ENCODE measurements at regions of chr12 and their contacts with region 1.

Region 1: DNA sequence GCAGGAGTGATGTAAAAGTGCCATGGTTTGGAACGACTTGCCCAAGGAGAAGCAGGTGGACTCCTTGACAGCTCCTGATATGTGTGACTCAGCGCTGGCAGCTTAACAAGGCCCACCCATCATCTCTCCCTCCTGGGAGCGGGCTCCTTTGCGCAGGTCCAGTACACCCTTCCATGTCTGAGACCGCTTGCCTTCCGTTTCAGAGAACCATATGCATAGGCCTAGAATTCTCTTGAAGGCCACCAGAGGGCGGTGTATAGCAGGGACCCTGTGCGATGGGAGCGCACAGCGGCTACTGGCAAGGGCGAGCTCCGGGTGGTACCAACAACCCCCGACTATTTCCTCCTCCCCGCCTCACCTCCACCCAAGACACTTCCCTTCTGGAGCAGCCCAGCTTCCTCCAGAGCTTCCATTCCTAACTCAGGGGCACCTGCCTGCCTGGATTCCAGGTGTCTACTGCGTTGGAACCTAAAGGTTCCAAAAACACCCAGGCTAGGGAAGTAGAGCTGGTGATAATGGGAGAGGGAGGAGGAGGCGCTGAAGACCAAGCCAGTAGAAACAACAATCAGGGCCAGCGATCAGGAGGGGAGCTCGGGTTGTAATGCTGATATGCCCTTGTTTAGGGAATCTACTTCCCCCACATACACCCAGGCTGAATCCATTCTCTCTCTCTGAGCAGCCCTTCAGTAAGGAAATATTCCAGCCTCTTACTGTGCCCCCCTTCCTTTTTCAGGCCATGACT is 6.2 kb downstream of the DHH start:
- H3K4me3 ChIP-seq: peak overlapping the region; percentile 25
- H3K27ac ChIP-seq: no peak overlapping the region
- H3K4me1 ChIP-seq: no peaks in the 10 kb centered on the region
- CTCF ChIP-seq: peak; percentile 97

Region 2: DNA sequence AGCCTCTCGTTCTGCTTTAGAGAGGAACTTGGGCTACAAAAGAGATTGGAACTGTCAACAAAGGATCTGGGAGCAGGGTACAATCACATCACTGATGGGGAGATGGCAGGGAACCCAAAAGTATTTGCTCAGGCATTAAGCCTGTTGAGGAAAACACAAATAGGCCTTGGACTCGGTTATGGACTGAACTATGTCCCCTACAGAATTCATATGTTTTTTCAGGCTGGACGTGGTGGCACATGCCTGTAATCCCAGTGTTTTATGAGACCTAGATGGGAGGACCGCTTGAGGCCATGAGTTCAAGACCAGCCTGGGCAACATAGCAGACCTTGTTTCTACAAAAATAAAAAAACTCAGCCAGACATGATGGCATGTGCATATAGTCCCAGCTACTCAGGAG is 250.3 kb before region 1 on chr12:
- CTCF ChIA-PET with region 1: no interaction called
- POLR2A ChIA-PET with region 1: no interaction called
- H3K4me3 ChIP-seq: no peak overlapping the region
- H3K27ac ChIP-seq: no peak overlapping the region
- H3K4me1 ChIP-seq: no peaks in the 10 kb centered on the region
- CTCF ChIP-seq: no peak

Region 3: DNA sequence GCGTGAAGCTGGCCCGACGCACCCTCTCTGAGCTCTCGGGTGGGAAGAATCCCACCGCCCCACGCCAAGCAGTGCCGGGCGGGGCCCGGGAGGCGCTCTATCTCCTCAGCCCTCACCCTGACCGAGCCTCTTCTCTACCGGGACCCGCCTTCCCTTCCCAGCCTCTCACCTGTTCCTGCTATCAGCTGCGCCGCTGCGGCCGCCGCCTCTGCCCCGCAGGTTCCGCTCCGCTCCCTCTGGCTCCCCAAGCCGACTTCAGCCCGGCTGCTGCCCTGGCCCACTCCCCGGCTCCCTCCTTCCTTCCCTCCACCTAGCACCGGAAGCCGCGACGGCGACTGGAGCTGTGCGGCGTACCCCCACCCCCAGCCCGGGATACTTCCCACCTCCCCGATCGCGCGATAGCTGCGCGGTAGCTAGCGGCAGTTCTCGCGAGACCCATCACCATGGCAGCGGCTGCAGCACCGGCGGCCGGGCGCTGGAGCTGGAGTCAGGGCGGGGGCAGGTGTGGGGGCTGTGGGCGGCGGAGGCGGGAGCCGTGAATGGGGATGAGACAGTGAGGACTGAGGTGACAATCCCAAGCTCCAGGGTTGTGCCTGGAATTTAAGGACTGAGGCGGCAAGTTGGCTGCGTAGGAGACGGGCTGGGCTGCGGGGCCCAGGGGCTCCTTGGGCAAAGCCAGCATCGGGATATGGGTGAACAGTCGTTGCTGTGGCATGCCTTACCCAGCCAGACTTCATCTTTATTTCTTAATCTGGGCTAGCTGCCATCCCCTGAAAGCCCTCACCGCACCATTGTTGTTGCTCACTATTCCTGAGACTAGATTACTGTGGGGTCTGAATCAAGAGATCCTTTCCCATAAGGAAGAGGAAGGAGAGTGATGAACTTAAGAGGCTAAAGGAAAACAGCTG is 131.0 kb before region 1 on chr12 and contains the start of gene ARF3:
- CTCF ChIA-PET with region 1: no interaction called
- POLR2A ChIA-PET with region 1: no interaction called
- H3K4me3 ChIP-seq: peak within 1 kb of the TSS; percentile 81
- H3K27ac ChIP-seq: peak within 1 kb of the TSS; percentile 90
- H3K4me1 ChIP-seq: no peaks in the 10 kb centered on the region
- CTCF ChIP-seq: no peak; the same call in none of the 2 replicates

Region 4: DNA sequence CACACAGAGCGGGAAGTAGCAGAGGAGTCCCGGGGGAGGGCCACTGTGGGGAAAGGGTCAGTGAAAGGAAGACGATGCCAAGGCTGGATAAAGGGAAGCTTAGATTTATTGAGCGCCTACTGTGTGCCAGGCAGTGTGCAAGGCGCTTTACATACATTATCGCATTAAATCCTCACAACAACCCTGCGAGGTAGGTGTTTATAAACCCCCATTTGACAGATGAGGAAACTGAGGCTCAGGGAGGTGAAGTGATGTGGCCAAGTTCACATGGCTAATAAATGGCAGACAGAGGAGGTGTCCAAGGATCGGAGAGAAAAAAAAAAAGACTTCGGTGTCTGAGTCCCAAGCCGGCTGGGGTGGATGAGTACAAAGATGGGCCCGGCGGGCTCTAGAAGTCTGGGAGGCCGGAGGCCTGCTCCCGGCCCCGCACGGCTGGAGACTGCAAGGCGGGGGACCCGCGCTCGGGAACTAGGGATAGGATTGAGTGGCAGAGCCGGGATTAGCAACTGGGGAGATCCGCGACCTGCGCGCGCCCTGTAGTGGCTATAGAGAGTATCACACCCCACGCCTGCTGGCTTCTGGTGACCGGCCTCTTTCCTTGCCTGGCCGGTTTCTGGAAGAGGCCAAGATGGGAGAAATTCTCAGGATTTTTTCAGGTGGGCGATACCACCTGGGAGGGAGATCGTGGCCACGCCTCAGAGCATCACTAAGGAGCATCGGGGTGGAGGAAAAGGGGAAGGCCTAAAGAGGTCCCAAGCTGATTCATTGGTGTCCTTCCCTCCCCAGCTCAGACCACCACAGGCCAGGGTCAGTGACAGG is 93.1 kb before region 1 on chr12:
- CTCF ChIA-PET with region 1: interaction called, 10 read pairs
- POLR2A ChIA-PET with region 1: no interaction called
- H3K4me3 ChIP-seq: no peak overlapping the region
- H3K27ac ChIP-seq: no peak overlapping the region
- H3K4me1 ChIP-seq: peaks cover 6% of the 10 kb centered on the region
- CTCF ChIP-seq: peak; percentile 68

Region 5: DNA sequence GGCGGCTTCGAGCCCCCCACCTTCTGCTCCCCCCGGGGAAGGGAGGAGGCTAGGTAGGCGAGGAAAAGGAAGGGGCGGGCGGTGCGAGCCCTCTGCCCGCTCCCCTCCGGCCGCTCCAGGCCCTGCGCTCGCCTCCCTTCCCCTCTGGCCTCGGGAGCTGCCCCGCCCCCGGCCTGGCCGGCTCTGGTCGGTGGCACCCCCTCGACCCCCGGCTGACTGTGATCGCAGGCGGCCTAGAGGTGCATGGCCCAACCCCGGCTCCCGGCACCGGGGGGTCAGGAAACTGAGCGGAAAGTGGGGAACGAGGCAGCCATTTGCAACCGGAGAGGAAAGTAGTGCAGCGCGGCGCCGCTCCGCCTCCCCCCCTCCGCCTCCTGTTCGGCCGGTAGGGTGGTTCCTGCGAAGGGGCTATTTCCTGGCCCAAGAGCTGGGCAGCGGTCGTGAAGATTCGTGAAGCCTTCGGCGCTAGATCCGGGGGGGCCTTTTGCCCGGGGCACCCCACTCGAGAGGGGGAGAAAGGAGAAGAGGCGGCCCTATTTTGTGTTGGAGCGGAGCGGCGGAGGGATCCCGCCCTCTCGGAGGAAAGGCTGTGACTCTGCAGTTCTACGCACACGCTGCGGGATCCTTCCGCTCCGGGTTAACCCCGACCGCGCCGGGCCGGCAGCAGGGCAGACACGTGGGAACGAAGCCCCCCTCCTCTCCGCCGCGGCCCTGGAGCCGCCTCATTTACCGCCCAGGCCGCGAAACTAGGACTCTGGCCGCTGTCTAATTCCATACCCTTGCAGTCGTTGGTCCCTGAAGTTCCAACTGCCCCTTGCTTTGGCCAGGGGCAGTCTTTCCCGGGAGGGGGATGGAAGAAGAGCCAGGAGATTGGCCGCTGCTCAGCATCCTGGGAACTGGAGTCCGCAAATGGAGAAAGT is 27.9 kb before region 1 on chr12 and contains the start of gene KMT2D:
- CTCF ChIA-PET with region 1: interaction called, 131 read pairs
- POLR2A ChIA-PET with region 1: interaction called, 15 read pairs
- H3K4me3 ChIP-seq: peak within 1 kb of the TSS; percentile 95
- H3K27ac ChIP-seq: peak within 1 kb of the TSS; percentile 93
- H3K4me1 ChIP-seq: peaks cover 11% of the 10 kb centered on the region
- CTCF ChIP-seq: peak; percentile 94

Region 6: GRCh38 chr12:49105608-49106007 is 17.2 kb after region 1 on chr12:
- CTCF ChIA-PET with region 1: interaction called, 118 read pairs
- POLR2A ChIA-PET with region 1: interaction called, 16 read pairs
- H3K4me3 ChIP-seq: no peak overlapping the region
- H3K27ac ChIP-seq: no peak overlapping the region
- H3K4me1 ChIP-seq: peaks cover 10% of the 10 kb centered on the region
- CTCF ChIP-seq: no peak

Region 7: GRCh38 chr12:49121047-49121696 is 32.8 kb after region 1 on chr12:
- CTCF ChIA-PET with region 1: interaction called, 37 read pairs
- POLR2A ChIA-PET with region 1: interaction called, 4 read pairs
- H3K4me3 ChIP-seq: no peak overlapping the region
- H3K27ac ChIP-seq: no peak overlapping the region
- H3K4me1 ChIP-seq: no peaks in the 10 kb centered on the region
- CTCF ChIP-seq: peak; percentile 51; the same call in 1 of the 2 replicates